ENCODE measurements at regions of chr21 and their contacts with region 1.

Region 1: GRCh38 chr21:41121785-41122421 is 46.1 kb upstream of the BACE2 start:
- DNase-seq: peak; percentile 69
- ATAC-seq: peak; percentile 21
- H3K4me3 ChIP-seq: no peak overlapping the region
- H3K4me3 Mint-ChIP-seq: no peak overlapping the region
- H3K27ac ChIP-seq: no peak overlapping the region
- H3K27ac Mint-ChIP-seq: no peak overlapping the region
- H3K4me1 ChIP-seq: no peaks in the 10 kb centered on the region
- H3K4me1 Mint-ChIP-seq: no peaks in the 10 kb centered on the region
- H3K27me3 ChIP-seq: peaks cover 0 to under 1% (median 0%) of the 10 kb centered on the region in 4 experiments
- H3K27me3 Mint-ChIP-seq: peaks cover 22% of the 10 kb centered on the region
- CTCF ChIP-seq: peak; percentile 80

Region 2: DNA sequence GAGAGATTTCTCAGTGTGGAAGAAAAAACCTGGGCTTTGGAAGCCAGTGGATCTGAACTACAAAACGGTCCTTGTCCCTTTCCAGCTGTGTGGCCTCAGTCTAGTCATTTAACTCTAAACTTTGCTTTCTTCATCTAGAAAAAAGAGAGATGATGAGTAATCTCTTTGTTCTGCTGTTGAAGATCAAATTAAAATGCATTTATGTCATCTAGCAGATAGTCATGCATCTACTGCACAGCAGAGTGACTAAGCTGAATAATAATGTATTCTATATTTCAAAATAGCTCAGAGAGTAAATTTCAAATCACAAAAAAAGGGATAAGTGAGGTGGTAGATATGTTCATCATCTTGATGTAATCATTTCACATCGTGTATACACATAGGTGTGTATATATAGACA is 748.1 kb before region 1 on chr21:
- CTCF ChIA-PET with region 1: no interaction called
- POLR2A ChIA-PET with region 1: no interaction called
- intact Hi-C with region 1: no loop called
- DNase-seq: no peak
- ATAC-seq: no peak
- H3K4me3 ChIP-seq: no peak overlapping the region
- H3K4me3 Mint-ChIP-seq: no peak overlapping the region
- H3K27ac ChIP-seq: no peak overlapping the region
- H3K27ac Mint-ChIP-seq: no peak overlapping the region
- H3K4me1 ChIP-seq: no peaks in the 10 kb centered on the region
- H3K4me1 Mint-ChIP-seq: no peaks in the 10 kb centered on the region
- H3K27me3 ChIP-seq: no peaks in the 10 kb centered on the region
- H3K27me3 Mint-ChIP-seq: no peaks in the 10 kb centered on the region
- CTCF ChIP-seq: no peak

Region 3: DNA sequence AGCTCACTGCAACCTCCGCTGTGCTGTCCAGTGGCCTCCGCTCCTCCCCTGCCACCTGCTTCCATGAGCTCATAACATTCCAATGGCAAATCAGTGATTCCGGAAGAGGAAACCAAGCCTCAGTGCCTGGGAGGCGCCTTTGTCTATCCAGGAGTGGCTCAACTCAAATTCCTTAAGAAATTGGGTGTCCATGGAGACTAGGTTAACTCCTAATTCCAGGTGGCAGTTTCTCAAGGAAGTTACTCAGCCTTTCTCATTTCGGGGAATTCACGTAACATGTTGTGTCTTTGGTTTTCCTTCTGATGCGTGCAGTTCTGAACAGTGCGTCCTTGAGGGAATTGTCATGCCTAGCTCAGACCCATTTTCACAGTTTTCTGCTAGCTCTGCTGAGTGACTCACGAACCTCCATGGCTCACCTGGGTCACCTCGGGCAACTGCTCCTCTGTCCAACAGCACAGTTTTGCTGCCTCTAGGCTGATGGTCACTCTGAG is 185.1 kb before region 1 on chr21:
- CTCF ChIA-PET with region 1: no interaction called
- POLR2A ChIA-PET with region 1: no interaction called
- intact Hi-C with region 1: no loop called
- DNase-seq: no peak
- ATAC-seq: no peak
- H3K4me3 ChIP-seq: no peak overlapping the region
- H3K4me3 Mint-ChIP-seq: no peak overlapping the region
- H3K27ac ChIP-seq: no peak overlapping the region
- H3K27ac Mint-ChIP-seq: no peak overlapping the region
- H3K4me1 ChIP-seq: no peaks in the 10 kb centered on the region
- H3K4me1 Mint-ChIP-seq: no peaks in the 10 kb centered on the region
- H3K27me3 ChIP-seq: no peaks in the 10 kb centered on the region
- H3K27me3 Mint-ChIP-seq: no peaks in the 10 kb centered on the region
- CTCF ChIP-seq: no peak

Region 4: GRCh38 chr21:41133896-41134522 is 12.1 kb after region 1 on chr21:
- CTCF ChIA-PET with region 1: interaction called, 20 read pairs
- POLR2A ChIA-PET with region 1: no interaction called
- intact Hi-C with region 1: no loop called
- DNase-seq: peak; percentile 17
- ATAC-seq: no peak
- H3K4me3 ChIP-seq: no peak overlapping the region
- H3K4me3 Mint-ChIP-seq: no peak overlapping the region
- H3K27ac ChIP-seq: no peak overlapping the region
- H3K27ac Mint-ChIP-seq: no peak overlapping the region
- H3K4me1 ChIP-seq: no peaks in the 10 kb centered on the region
- H3K4me1 Mint-ChIP-seq: no peaks in the 10 kb centered on the region
- H3K27me3 ChIP-seq: peaks cover 0 to 4% (median 2%) of the 10 kb centered on the region in 4 experiments
- H3K27me3 Mint-ChIP-seq: peaks cover 32% of the 10 kb centered on the region
- CTCF ChIP-seq: peak; percentile 20

Region 5: DNA sequence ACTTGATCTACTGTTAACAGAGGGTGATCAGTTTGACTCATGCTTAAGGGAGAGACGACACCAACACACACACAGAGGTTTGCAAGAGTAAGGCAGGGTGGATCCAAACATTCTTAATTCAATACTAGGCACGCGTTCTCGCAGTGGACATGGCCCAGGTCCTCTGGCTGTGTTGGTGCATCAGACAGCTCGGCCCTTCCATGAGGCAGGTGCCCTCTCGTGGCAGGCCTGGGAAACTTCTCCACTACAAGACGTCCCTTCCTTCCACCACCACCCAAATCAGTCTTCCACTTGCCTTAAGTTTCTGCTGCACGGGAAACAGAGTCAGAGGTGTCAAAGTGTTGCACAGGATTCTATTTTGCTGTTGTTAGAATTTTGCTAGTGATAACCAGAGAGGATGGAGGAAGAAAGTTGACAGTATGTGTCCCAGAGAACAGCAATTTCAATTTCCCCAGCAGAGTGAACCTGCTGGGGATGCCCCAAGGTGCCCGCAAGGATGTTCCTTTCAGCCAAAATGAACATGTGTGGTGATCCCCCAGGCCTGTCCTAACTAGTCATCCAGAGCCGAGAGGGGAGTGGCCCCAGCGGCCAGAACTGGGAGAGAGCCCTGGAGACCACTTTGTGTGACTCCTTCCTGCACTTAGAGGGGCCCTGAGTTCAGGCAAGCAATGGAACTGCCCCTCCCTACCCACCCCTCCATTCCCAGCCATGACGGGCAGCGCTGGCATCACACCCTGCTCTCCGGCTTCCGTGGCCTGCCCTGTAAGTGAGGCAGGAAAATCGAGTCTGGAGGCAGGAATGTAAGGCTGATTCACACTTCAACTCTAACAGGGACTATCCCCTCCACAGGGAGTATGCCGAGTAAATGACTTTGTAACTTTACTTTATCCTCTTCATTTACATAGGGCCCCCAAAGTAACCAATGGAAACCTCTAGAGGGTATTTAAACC is 338.9 kb after region 1 on chr21:
- CTCF ChIA-PET with region 1: no interaction called
- POLR2A ChIA-PET with region 1: no interaction called
- intact Hi-C with region 1: loop called (anchors 5 kb)
- DNase-seq: peak; percentile 69
- ATAC-seq: peak; percentile 75
- H3K4me3 ChIP-seq: no peak overlapping the region
- H3K4me3 Mint-ChIP-seq: no peak overlapping the region
- H3K27ac ChIP-seq: no peak overlapping the region
- H3K27ac Mint-ChIP-seq: no peak overlapping the region
- H3K4me1 ChIP-seq: peaks cover 11 to 15% of the 10 kb centered on the region in 2 donors
- H3K4me1 Mint-ChIP-seq: peaks cover 22% of the 10 kb centered on the region
- H3K27me3 ChIP-seq: no peaks in the 10 kb centered on the region
- H3K27me3 Mint-ChIP-seq: no peaks in the 10 kb centered on the region
- CTCF ChIP-seq: peak; percentile 75

Measured in B cell (primary cell).